ENCODE measurements at regions of chr17 and their contacts with region 1.

Region 1: DNA sequence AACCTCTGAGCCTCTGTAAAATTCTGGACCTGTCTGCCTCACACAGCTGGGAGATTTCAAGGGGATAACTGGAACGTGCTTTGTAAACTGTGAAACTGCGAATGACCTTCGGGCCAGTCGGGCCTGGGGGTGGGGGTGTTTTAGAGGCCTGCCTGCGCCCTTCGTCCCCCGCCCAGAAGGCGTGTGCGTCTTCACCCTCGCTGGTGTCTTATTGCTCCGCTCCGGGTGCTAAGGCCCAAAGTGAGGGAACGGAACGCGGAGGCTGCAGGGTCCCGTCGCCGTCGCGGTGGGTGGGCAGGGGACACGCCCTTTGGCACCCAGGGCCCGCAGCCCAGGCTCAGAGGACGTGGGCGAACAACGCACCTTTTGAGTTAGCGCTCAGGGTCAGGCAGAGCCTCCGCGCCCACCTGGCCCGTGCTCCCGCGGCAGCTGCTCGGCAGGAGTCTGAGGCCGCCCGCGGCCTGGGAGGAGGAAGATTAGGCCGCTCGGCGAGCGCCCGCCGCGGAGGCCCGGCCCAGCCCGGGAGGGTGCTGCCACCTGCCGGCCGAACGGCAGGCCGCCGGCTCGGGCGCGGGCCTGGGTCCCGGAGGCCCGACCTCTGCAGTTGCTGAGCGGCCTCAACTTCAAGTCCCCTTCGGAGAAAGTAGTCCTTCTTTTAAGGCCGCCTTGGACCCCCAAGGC is 29.7 kb downstream of the DCAKD start:
- DNase-seq: peak; percentile 67 to 93
- ATAC-seq: peak; percentile 63 to 86
- H3K4me3 ChIP-seq: peak overlapping the region; percentile 16; the same call in 1 of the 3 replicates
- H3K27ac ChIP-seq: peak overlapping the region; percentile 55 to 76
- H3K4me1 ChIP-seq: peaks cover 24% of the 10 kb centered on the region
- CTCF ChIP-seq: peak; percentile 99
- EP300 ChIP-seq: no peak
- POLR2A ChIP-seq: no peak; the same call in 1 of the 2 replicates
- RAD21 ChIP-seq: peak; percentile 76 to 96

Region 2: GRCh38 chr17:44775136-44775837 is 246.5 kb before region 1 on chr17:
- CTCF ChIA-PET with region 1: interaction called, 27 read pairs
- POLR2A ChIA-PET with region 1: no interaction called
- DNase-seq: peak; percentile 99
- ATAC-seq: peak; percentile 78 to 92
- H3K4me3 ChIP-seq: peak overlapping the region; percentile 54
- H3K27ac ChIP-seq: peak overlapping the region; percentile 13 to 64; a peak in 4 of 6 replicates
- H3K4me1 ChIP-seq: peaks cover 17% of the 10 kb centered on the region
- CTCF ChIP-seq: peak; percentile 34; the same call in 1 of the 3 replicates
- EP300 ChIP-seq: no peak
- POLR2A ChIP-seq: peak; percentile 58
- RAD21 ChIP-seq: peak in 1 of 2 experiments; percentile 8; a peak in 1 of 5 replicates

Region 3: GRCh38 chr17:44899069-44899782 is 122.5 kb before region 1 on chr17 and contains the start of gene EFTUD2:
- CTCF ChIA-PET with region 1: interaction called, 129 read pairs
- POLR2A ChIA-PET with region 1: interaction called, 5 read pairs
- DNase-seq: peak; percentile 94 to 96
- ATAC-seq: peak; percentile 83 to 85
- H3K4me3 ChIP-seq: peak within 1 kb of the TSS; percentile 65
- H3K27ac ChIP-seq: peak within 1 kb of the TSS; percentile 87 to 96
- H3K4me1 ChIP-seq: peaks cover 37% of the 10 kb centered on the region
- CTCF ChIP-seq: no peak
- EP300 ChIP-seq: peak in 1 of 2 experiments; percentile 25; a peak in 1 of 5 replicates
- POLR2A ChIP-seq: peak; percentile 85
- RAD21 ChIP-seq: peak in 1 of 2 experiments; percentile 18; a peak in 2 of 5 replicates
- polyA plus RNA-seq, gene EFTUD2: 254 and 353 TPM in 2 replicates

Region 4: GRCh38 chr17:44955674-44956425 is 65.9 kb before region 1 on chr17:
- CTCF ChIA-PET with region 1: interaction called, 31 read pairs
- POLR2A ChIA-PET with region 1: no interaction called
- DNase-seq: no peak
- ATAC-seq: no peak
- H3K4me3 ChIP-seq: no peak overlapping the region
- H3K27ac ChIP-seq: no peak overlapping the region; a peak in 1 of 6 replicates
- H3K4me1 ChIP-seq: peaks cover 9% of the 10 kb centered on the region
- CTCF ChIP-seq: no peak
- EP300 ChIP-seq: no peak
- POLR2A ChIP-seq: no peak
- RAD21 ChIP-seq: no peak

Region 5: GRCh38 chr17:44981221-44981968 is 40.4 kb before region 1 on chr17:
- CTCF ChIA-PET with region 1: interaction called, 98 read pairs
- POLR2A ChIA-PET with region 1: interaction called, 3 read pairs
- DNase-seq: peak; percentile 84 to 88
- ATAC-seq: peak; percentile 77 to 78
- H3K4me3 ChIP-seq: peak overlapping the region; percentile 32
- H3K27ac ChIP-seq: peak overlapping the region; percentile 82 to 87
- H3K4me1 ChIP-seq: peaks cover 40% of the 10 kb centered on the region
- CTCF ChIP-seq: no peak
- EP300 ChIP-seq: peak; percentile 33 to 44; a peak in 1 of 5 replicates
- POLR2A ChIP-seq: no peak
- RAD21 ChIP-seq: no peak; a peak in 1 of 5 replicates

Region 6: DNA sequence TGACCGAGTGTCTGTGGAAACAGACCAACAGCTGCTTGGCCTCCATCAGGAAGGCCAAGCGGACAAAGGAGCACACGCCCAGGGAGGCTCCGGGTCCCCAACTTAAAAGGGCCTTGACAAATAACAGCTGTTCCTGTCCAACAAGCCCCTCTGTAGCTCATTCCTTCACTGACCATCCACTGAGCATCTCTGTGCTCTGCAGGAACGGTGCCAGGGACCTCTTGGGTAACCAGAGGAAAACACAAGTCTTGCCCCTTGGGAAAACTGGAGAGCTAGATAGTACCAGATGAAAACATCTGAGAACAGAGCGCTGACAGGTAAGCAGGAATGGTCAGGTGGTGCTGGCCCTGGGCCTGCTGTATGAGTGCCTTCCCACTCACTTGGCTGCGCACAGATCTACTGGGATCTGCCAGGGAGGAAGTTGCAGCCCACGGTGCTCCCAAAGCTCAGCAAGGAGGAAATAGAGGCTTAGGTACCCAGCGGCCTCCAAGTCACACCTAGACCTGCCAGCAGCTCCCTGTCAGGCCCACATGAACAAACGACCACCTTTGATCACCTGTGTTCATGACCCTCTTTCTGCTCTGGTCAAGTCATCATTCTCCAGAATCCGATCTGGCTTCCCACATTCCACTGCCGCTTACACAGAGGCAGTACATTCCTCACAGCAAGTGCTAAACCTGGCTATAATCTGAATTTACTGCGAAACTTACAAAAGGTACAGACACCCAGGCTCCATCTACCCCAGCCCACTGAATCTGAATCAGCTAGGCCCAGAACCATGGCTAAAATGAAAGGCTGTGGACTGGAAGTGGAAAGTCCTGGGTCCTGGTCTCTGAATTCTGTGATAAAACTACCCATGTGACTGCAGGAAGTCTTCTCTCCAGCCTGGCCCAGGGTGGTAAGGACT is 17.2 kb after region 1 on chr17:
- CTCF ChIA-PET with region 1: interaction called, 194 read pairs
- POLR2A ChIA-PET with region 1: interaction called, 3 read pairs
- DNase-seq: no peak
- ATAC-seq: no peak
- H3K4me3 ChIP-seq: no peak overlapping the region
- H3K27ac ChIP-seq: 0 out of 6 replicates have a peak overlapping the region, but pooled peaks of 1 of the 2 experiments have one; percentile 0
- H3K4me1 ChIP-seq: peaks cover 12% of the 10 kb centered on the region; the same call in 1 of the 3 replicates
- CTCF ChIP-seq: no peak
- EP300 ChIP-seq: no peak
- POLR2A ChIP-seq: no peak
- RAD21 ChIP-seq: no peak

Region 7: DNA sequence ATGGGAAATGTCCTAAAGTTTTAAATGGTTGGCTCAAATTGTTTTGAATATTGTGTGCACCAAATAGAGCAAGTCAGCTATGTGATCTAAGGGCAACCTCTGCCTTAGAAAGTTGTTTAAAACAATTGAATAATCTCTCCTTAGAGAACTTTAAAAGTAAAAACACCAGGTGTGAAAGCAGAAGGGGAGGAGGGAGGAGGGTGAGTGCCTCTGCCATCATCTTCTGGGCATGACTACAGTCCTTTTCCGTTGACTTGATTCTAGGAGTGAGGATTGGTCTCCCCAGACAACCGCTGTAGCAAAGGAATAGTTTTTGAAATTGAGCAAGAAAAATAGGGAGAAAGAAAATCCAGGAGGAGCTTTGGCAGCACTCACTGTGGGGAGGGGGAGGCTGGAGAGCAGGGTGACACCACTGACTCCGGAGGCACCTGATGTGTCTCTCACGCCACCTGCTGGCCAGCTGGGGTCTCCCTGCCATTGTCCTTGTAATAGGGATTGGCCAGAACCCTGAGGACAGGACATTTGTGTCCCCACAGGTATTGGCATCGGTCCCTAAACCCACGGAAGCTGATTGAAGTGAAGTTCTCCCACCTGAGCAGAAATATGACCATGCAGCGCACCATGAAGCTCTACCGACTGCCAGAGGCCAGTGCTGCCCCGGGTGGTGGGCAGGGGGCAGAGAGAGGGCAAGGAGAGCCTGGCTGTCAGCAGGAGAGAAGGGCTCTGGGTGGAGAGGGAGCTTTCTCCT is 77.3 kb after region 1 on chr17:
- CTCF ChIA-PET with region 1: interaction called, 40 read pairs
- POLR2A ChIA-PET with region 1: no interaction called
- DNase-seq: peak; percentile 85 to 99
- ATAC-seq: peak; percentile 87 to 92
- H3K4me3 ChIP-seq: no peak overlapping the region
- H3K27ac ChIP-seq: no peak overlapping the region
- H3K4me1 ChIP-seq: peaks cover 11% of the 10 kb centered on the region
- CTCF ChIP-seq: peak; percentile 98
- EP300 ChIP-seq: no peak
- POLR2A ChIP-seq: no peak
- RAD21 ChIP-seq: peak; percentile 84 to 87